Naive thymus-derived CD4-positive, alpha-beta T cell (primary cell): ENCODE measurements at regions of chr13 and their contacts with region 1.

Region 1: DNA sequence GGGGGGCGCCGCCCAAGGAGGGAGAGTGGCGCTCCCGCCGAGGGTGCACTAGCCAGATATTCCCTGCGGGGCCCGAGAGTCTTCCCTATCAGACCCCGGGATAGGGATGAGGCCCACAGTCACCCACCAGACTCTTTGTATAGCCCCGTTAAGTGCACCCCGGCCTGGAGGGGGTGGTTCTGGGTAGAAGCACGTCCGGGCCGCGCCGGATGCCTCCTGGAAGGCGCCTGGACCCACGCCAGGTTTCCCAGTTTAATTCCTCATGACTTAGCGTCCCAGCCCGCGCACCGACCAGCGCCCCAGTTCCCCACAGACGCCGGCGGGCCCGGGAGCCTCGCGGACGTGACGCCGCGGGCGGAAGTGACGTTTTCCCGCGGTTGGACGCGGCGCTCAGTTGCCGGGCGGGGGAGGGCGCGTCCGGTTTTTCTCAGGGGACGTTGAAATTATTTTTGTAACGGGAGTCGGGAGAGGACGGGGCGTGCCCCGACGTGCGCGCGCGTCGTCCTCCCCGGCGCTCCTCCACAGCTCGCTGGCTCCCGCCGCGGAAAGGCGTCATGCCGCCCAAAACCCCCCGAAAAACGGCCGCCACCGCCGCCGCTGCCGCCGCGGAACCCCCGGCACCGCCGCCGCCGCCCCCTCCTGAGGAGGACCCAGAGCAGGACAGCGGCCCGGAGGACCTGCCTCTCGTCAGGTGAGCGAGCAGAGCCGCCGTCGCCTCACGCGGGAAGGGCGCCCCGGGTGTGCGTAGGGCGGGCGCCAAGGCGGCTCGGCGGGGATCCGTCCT is at the start of gene RB1:
- DNase-seq: peak; percentile 85 to 92 (median 89)
- ATAC-seq: peak; percentile 92
- H3K4me3 ChIP-seq: peak within 1 kb of the TSS; percentile 85
- H3K4me3 Mint-ChIP-seq: peak within 1 kb of the TSS; percentile 76 to 99 (median 94)
- H3K27ac ChIP-seq: peak within 1 kb of the TSS; percentile 99
- H3K27ac Mint-ChIP-seq: peak within 1 kb of the TSS; percentile 93 to 98 (median 97)
- H3K4me1 ChIP-seq: peaks cover 10 to 15% of the 10 kb centered on the region in 2 donors
- H3K4me1 Mint-ChIP-seq: peaks cover 16 to 47% (median 40%) of the 10 kb centered on the region in 7 donors
- H3K27me3 ChIP-seq: no peaks in the 10 kb centered on the region
- H3K27me3 Mint-ChIP-seq: no peaks in the 10 kb centered on the region
- total RNA-seq, gene RB1: 18.0 to 37.1 (median 23.6) TPM

Region 2: DNA sequence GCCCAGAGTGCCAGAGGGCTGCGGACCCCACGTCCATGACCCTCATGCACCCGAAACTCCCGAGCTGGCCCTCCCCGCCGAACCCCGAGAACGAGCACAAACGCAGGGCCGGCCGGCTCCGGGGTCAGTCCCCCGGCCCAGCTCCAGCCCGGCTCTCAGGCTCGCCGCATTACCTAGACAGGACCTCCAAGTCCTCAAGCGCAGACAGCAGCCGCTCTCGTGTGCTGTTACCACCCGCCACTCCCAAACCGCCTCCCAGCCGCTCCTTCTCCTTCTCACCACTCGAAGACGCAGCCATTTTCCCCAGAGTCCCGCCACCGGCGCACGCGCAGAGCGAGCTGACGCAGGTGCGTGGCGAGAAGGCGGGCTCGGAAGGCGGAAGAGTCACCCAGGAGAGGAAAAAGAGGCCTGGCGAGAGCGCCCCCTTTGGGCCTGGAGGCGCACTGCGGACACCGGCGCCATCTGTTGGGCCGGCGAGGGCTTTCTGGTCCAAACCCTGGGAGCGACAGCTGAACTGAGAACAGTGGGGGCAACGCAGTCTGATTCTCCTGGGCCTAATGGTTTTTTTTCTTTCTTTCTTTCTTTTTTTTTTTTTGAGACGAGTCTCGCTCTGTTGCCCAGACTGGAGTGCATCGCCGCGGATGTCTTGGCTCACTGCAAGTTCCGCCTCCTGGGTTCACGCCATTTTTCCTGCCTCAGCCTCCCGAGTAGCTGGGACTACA is 208.6 kb before region 1 on chr13 and contains the start of gene MED4:
- CTCF ChIA-PET with region 1: interaction called, 4 read pairs
- POLR2A ChIA-PET with region 1: interaction called, 10 read pairs
- intact Hi-C with region 1: loop called (anchors 1 kb)
- DNase-seq: peak; percentile 94 to 99 (median 98)
- ATAC-seq: peak; percentile 100
- H3K4me3 ChIP-seq: peak within 1 kb of the TSS; percentile 90
- H3K4me3 Mint-ChIP-seq: peak within 1 kb of the TSS; percentile 94 to 99 (median 96)
- H3K27ac ChIP-seq: peak within 1 kb of the TSS; percentile 99
- H3K27ac Mint-ChIP-seq: peak within 1 kb of the TSS; percentile 92 to 98 (median 96)
- H3K4me1 ChIP-seq: peaks cover 13 to 26% of the 10 kb centered on the region in 2 donors
- H3K4me1 Mint-ChIP-seq: peaks cover 26 to 56% (median 48%) of the 10 kb centered on the region in 7 donors
- H3K27me3 ChIP-seq: no peaks in the 10 kb centered on the region
- H3K27me3 Mint-ChIP-seq: peaks cover 0 to 9% (median 0%) of the 10 kb centered on the region in 5 donors
- total RNA-seq, gene MED4: 43.4 to 60.9 (median 50.0) TPM

Region 3: DNA sequence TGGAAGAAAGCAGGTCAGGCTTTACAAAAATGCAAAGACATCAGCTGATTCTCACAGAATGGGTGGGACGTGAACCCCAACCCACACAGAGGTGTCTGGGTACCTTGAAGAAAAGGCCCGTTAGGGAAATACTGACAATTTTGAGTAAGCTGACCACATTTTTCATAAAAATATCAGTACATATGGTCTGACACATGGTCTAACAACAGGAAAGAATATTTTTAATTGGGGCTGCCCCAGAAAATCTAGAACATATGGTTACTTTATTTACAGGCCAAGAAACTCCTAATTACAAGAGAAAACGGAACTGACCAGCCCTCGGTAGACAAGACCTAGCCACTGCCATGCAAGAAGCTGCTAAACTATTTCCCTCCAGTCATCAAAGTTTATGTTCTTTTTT is 119.3 kb before region 1 on chr13:
- CTCF ChIA-PET with region 1: no interaction called
- POLR2A ChIA-PET with region 1: interaction called, 5 read pairs
- intact Hi-C with region 1: loop called in 1 of 2 experiments (anchors 5 kb)
- DNase-seq: no peak
- ATAC-seq: no peak
- H3K4me3 ChIP-seq: no peak overlapping the region
- H3K4me3 Mint-ChIP-seq: peak overlapping the region in 9 of 10 donors; percentile 41 to 79 (median 65)
- H3K27ac ChIP-seq: peak overlapping the region; percentile 42
- H3K27ac Mint-ChIP-seq: peak overlapping the region in 8 of 9 donors; percentile 82 to 97 (median 90)
- H3K4me1 ChIP-seq: peaks cover 8 to 58% of the 10 kb centered on the region in 2 donors
- H3K4me1 Mint-ChIP-seq: peaks cover 40 to 81% (median 64%) of the 10 kb centered on the region in 7 donors
- H3K27me3 ChIP-seq: no peaks in the 10 kb centered on the region
- H3K27me3 Mint-ChIP-seq: peaks cover 0 to 10% (median 0%) of the 10 kb centered on the region in 5 donors

Region 4: GRCh38 chr13:48319531-48320398 is 16.2 kb after region 1 on chr13:
- CTCF ChIA-PET with region 1: no interaction called
- POLR2A ChIA-PET with region 1: interaction called, 8 read pairs
- intact Hi-C with region 1: loop called (anchors 1 to 2 kb)
- DNase-seq: peak in 2 of 9 donors; percentile 26 to 27
- ATAC-seq: peak; percentile 47
- H3K4me3 ChIP-seq: peak overlapping the region; percentile 54
- H3K4me3 Mint-ChIP-seq: peak overlapping the region; percentile 72 to 94 (median 87)
- H3K27ac ChIP-seq: no peak overlapping the region
- H3K27ac Mint-ChIP-seq: peak overlapping the region; percentile 31 to 85 (median 63)
- H3K4me1 ChIP-seq: peaks cover 0 to 4% of the 10 kb centered on the region in 2 donors
- H3K4me1 Mint-ChIP-seq: peaks cover 16 to 46% (median 35%) of the 10 kb centered on the region in 7 donors
- H3K27me3 ChIP-seq: no peaks in the 10 kb centered on the region
- H3K27me3 Mint-ChIP-seq: peaks cover 0 to 16% (median 0%) of the 10 kb centered on the region in 5 donors

Region 5: GRCh38 chr13:48532506-48533499 is 229.3 kb after region 1 on chr13 and contains the start of gene RCBTB2:
- CTCF ChIA-PET with region 1: no interaction called
- POLR2A ChIA-PET with region 1: interaction called, 6 read pairs
- intact Hi-C with region 1: loop called (anchors 1 kb)
- DNase-seq: peak; percentile 97 to 100 (median 99)
- ATAC-seq: peak; percentile 92
- H3K4me3 ChIP-seq: peak within 1 kb of the TSS; percentile 80
- H3K4me3 Mint-ChIP-seq: peak within 1 kb of the TSS; percentile 83 to 99 (median 94)
- H3K27ac ChIP-seq: peak within 1 kb of the TSS; percentile 96
- H3K27ac Mint-ChIP-seq: peak within 1 kb of the TSS; percentile 98 to 100 (median 99)
- H3K4me1 ChIP-seq: peaks cover 10 to 16% of the 10 kb centered on the region in 2 donors
- H3K4me1 Mint-ChIP-seq: peaks cover 11 to 44% (median 31%) of the 10 kb centered on the region in 7 donors
- H3K27me3 ChIP-seq: no peaks in the 10 kb centered on the region
- H3K27me3 Mint-ChIP-seq: peaks cover 0 to 18% (median 0%) of the 10 kb centered on the region in 5 donors
- total RNA-seq, gene RCBTB2: 7.6 to 17.8 (median 10.1) TPM

Region 6: GRCh38 chr13:48975856-48976575 is 672.5 kb after region 1 on chr13 and contains the start of gene FNDC3A:
- CTCF ChIA-PET with region 1: no interaction called
- POLR2A ChIA-PET with region 1: no interaction called
- intact Hi-C with region 1: loop called (anchors 2 to 5 kb)
- DNase-seq: peak; percentile 84 to 90 (median 86)
- ATAC-seq: peak; percentile 87
- H3K4me3 ChIP-seq: peak within 1 kb of the TSS; percentile 82
- H3K4me3 Mint-ChIP-seq: peak within 1 kb of the TSS; percentile 92 to 100 (median 98)
- H3K27ac ChIP-seq: peak within 1 kb of the TSS; percentile 95
- H3K27ac Mint-ChIP-seq: peak within 1 kb of the TSS; percentile 93 to 99 (median 99)
- H3K4me1 ChIP-seq: peaks cover 13 to 28% of the 10 kb centered on the region in 2 donors
- H3K4me1 Mint-ChIP-seq: peaks cover 35 to 69% (median 49%) of the 10 kb centered on the region in 7 donors
- H3K27me3 ChIP-seq: no peaks in the 10 kb centered on the region
- H3K27me3 Mint-ChIP-seq: peaks cover 0 to 6% (median 0%) of the 10 kb centered on the region in 5 donors
- total RNA-seq, gene FNDC3A: 34.2 to 46.4 (median 39.1) TPM